K562 (cell line): ENCODE measurements at regions of chr12 and their contacts with region 1.

Region 1: DNA sequence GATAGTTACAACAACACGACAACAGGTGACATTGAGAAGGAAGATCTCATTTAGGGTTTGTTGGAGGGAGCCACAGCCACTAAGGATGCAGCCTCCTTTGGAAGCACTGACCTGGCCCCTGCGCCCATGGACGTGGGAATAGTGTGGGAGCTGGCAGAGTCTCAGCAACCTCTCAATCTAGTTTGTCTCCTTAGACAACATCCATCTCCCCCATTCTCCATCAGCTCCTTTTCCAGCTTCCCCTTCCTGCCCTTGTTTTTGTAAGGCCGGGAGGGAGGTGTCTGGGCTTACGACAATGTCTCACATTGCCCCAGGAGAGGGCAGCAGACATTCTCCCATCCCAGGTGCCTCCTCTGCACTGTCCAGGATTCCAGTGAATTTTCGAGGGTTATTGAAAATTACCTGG is 170.2 kb upstream of the PZP start:
- DNase-seq: peak; percentile 17 to 39 (median 28)
- ATAC-seq: peak; percentile 93
- H3K4me3 ChIP-seq: no peak overlapping the region
- H3K27ac ChIP-seq: no peak overlapping the region
- H3K4me1 ChIP-seq: peaks cover 0 to 4% of the 10 kb centered on the region in 2 experiments; a peak in 2 of 5 replicates
- H3K27me3 ChIP-seq: peaks cover 0 to 11% of the 10 kb centered on the region in 2 experiments; a peak in 3 of 5 replicates
- CTCF ChIP-seq: peak; percentile 34 to 66 (median 50); a peak in 4 of 6 replicates
- EP300 ChIP-seq: no peak
- POLR2A ChIP-seq: no peak
- RAD21 ChIP-seq: peak; percentile 63 to 68

Region 2: DNA sequence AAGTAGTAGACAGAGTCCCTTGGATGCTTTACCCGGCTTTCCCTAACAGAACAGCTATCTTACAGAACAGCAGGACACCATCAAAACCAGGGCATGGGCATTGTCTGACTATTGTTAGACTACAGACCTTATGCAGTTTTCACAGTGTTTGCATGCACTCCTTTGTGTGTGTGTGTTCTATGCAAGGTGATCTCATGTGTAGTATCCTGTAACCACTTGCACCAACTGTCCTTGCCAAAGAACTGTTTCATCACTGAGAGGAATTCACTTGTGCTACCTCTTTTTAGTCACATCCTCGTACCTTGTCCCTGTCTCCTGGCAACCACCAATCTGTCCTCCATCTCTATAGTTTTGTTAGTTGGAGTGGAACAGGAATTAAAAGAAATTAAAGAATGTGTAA is 13.4 kb after region 1 on chr12:
- CTCF ChIA-PET with region 1: no interaction called
- POLR2A ChIA-PET with region 1: no interaction called
- in situ Hi-C with region 1: no loop called
- intact Hi-C with region 1: no loop called
- DNase-seq: no peak
- ATAC-seq: no peak
- H3K4me3 ChIP-seq: no peak overlapping the region
- H3K27ac ChIP-seq: no peak overlapping the region
- H3K4me1 ChIP-seq: no peaks in the 10 kb centered on the region; a peak in 1 of 5 replicates
- H3K27me3 ChIP-seq: no peaks in the 10 kb centered on the region
- CTCF ChIP-seq: no peak
- EP300 ChIP-seq: no peak
- POLR2A ChIP-seq: no peak
- RAD21 ChIP-seq: no peak

Region 3: DNA sequence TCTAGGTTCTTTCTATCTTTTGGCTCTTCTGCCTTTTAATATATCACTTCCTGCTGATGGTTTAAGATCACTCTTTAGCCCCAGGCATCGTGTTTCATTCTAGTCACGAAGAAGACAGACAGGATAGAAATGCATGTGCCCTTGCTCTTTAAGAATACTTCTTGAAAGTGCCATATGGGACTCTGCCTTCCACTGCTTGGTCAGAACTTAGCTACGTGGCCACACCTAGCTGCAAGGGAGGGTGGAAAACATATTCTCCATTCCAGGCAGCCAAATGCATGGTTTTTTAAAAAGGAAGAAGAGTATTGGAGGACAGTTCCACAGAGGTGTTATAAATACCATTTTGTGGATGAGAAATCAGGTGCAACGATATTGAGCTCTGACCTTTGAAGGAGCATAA is 86.0 kb after region 1 on chr12:
- CTCF ChIA-PET with region 1: interaction called, 4 read pairs
- POLR2A ChIA-PET with region 1: no interaction called
- in situ Hi-C with region 1: no loop called
- intact Hi-C with region 1: loop called (anchors 10 kb)
- DNase-seq: no peak
- ATAC-seq: no peak
- H3K4me3 ChIP-seq: no peak overlapping the region
- H3K27ac ChIP-seq: no peak overlapping the region
- H3K4me1 ChIP-seq: no peaks in the 10 kb centered on the region; a peak in 1 of 5 replicates
- H3K27me3 ChIP-seq: no peaks in the 10 kb centered on the region
- CTCF ChIP-seq: no peak
- EP300 ChIP-seq: no peak
- POLR2A ChIP-seq: no peak
- RAD21 ChIP-seq: no peak

Region 4: GRCh38 chr12:9588749-9589148 is 210.3 kb after region 1 on chr12:
- CTCF ChIA-PET with region 1: no interaction called
- POLR2A ChIA-PET with region 1: no interaction called
- in situ Hi-C with region 1: loop called (anchors 10 kb)
- intact Hi-C with region 1: no loop called
- DNase-seq: no peak
- ATAC-seq: no peak
- H3K4me3 ChIP-seq: no peak overlapping the region
- H3K27ac ChIP-seq: no peak overlapping the region
- H3K4me1 ChIP-seq: peaks cover 0 to 13% of the 10 kb centered on the region in 2 experiments; a peak in 3 of 5 replicates
- H3K27me3 ChIP-seq: no peaks in the 10 kb centered on the region
- CTCF ChIP-seq: no peak
- EP300 ChIP-seq: no peak
- POLR2A ChIP-seq: no peak
- RAD21 ChIP-seq: no peak

Region 5: GRCh38 chr12:9707864-9708808 is 329.7 kb after region 1 on chr12:
- CTCF ChIA-PET with region 1: no interaction called
- POLR2A ChIA-PET with region 1: no interaction called
- in situ Hi-C with region 1: no loop called
- intact Hi-C with region 1: loop called (anchors 10 kb)
- DNase-seq: peak; percentile 34 to 67 (median 42)
- ATAC-seq: peak; percentile 88
- H3K4me3 ChIP-seq: no peak overlapping the region
- H3K27ac ChIP-seq: no peak overlapping the region
- H3K4me1 ChIP-seq: no peaks in the 10 kb centered on the region; a peak in 1 of 5 replicates
- H3K27me3 ChIP-seq: no peaks in the 10 kb centered on the region
- CTCF ChIP-seq: peak; percentile 56 to 70 (median 69)
- EP300 ChIP-seq: no peak
- POLR2A ChIP-seq: no peak
- RAD21 ChIP-seq: peak; percentile 51 to 75